PC-3 (cell line): ENCODE measurements at regions of chr12 and their contacts with region 1.

Region 1: GRCh38 chr12:49244176-49244575 is 20.7 kb upstream of the TUBA1C start:
- DNase-seq: no peak
- ATAC-seq: no peak
- H3K4me3 ChIP-seq: no peak overlapping the region
- H3K27ac ChIP-seq: no peak overlapping the region
- H3K4me1 ChIP-seq: no peaks in the 10 kb centered on the region
- H3K27me3 ChIP-seq: no peaks in the 10 kb centered on the region
- CTCF ChIP-seq: no peak

Region 2: DNA sequence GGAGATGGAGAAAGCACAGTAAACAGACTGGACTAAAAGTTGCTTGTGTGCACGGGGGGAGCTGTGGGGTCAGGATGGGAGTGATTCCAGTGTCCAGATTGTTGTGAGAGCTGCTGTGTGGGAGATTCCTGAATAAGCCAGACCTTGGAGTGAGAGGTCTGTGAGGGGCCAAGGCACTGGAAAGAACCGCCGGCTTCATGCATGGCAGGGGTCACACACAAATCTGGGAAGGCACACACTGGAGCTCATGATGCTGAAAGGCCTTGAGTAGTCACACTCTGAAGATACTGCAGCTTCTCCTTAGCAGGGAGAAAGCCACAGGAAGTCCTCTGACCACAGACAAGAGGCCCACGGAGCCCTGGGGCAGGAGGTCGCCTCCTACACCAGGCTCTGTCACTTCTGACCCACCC is 478.4 kb before region 1 on chr12:
- CTCF ChIA-PET with region 1: no interaction called
- POLR2A ChIA-PET with region 1: interaction called, 11 read pairs
- intact Hi-C with region 1: no loop called
- DNase-seq: no peak
- ATAC-seq: no peak
- H3K4me3 ChIP-seq: no peak overlapping the region
- H3K27ac ChIP-seq: no peak overlapping the region
- H3K4me1 ChIP-seq: peaks cover 9% of the 10 kb centered on the region; the same call in 1 of the 2 replicates
- H3K27me3 ChIP-seq: no peaks in the 10 kb centered on the region
- CTCF ChIP-seq: no peak

Region 3: DNA sequence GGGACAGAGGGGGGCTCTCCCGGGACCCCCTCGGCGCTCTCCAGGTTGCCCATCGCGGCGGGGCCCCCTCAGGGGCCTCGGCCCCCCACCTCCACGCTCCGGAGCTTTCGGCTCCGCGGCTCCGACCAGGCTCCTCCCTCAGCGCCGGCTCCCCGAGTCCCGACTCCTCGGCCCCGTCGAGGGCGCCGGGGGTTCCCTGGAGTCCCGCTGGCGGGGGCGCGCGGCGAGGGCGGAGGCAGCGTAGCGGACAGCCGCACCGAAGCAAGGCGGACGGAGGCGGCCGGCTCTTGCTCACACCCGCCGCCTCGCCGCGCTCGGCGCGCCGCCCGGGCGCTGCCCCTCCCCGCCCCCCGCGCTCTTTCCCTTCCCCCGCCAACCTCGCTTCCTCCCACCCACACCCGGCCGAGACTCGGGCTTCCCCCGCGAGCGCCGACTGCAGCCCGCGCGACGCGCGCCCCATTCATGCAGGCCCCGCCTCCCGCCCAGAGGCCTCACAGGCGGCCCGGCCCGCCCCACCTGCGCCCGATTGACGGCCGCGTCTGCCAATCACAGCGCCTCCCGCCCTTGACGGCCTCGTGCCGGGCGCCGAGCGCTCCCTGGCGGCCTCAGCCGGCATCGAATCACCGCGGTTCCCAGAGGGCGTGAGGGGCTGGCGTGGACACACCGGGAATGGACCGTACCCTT is 463.1 kb after region 1 on chr12 and contains the start of gene FMNL3:
- CTCF ChIA-PET with region 1: no interaction called
- POLR2A ChIA-PET with region 1: interaction called, 12 read pairs
- intact Hi-C with region 1: no loop called
- DNase-seq: peak; percentile 95
- ATAC-seq: peak; percentile 95
- H3K4me3 ChIP-seq: peak within 1 kb of the TSS; percentile 74
- H3K27ac ChIP-seq: no peak within 1 kb of the TSS
- H3K4me1 ChIP-seq: peaks cover 9% of the 10 kb centered on the region; the same call in 1 of the 2 replicates
- H3K27me3 ChIP-seq: peaks cover 22% of the 10 kb centered on the region
- CTCF ChIP-seq: peak; percentile 91
- total RNA-seq, gene FMNL3: 5.2 and 6.2 TPM in 2 replicates